ENCODE measurements at regions of chr11 and their contacts with region 1.

Region 1: DNA sequence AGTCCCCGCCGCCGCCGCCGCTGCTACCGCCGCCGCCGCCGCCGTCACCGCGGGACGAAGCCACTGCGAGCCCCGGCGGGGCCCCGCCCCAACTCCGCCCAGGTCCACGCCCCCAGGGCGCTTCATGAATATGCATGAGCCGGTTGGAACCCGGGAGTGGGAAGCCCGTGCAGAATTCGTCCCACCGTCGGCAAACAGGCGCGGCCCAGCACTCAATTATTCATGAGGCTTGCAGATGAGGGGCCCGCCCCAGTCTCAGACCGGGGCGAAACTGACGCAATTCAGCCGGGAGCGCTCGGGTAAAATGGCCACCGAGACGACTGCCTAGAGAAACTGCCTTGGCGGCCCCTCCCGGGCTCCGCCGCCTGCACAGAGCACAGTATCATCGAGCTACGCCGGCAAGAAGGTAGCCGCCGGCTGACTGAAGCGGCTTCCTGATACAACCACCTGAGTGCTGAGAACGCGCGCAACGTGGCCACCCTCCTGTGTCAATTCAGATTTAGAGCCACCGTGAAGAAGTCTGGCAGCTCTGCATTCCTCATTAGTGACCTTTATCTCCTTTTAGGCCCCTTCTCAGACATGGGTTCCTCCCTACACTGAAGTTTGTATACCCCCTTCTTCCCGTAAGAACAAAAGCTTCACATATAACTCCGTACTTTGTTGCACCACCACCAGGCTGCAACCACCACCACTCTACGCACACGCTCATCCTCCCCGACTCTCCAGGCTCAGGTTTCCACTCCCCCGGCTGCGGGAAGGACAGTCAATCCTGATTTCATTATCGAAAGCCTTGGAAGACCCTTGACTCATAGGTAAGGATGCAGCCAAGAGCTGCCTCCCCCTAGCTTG is at the start of gene TNKS1BP1:
- DNase-seq: peak; percentile 97
- ATAC-seq: peak; percentile 80
- H3K4me3 ChIP-seq: peak within 1 kb of the TSS; percentile 97
- H3K27ac ChIP-seq: peak within 1 kb of the TSS; percentile 99
- H3K4me1 ChIP-seq: peaks cover 20% of the 10 kb centered on the region
- H3K27me3 ChIP-seq: no peaks in the 10 kb centered on the region
- CTCF ChIP-seq: no peak
- POLR2A ChIP-seq: peak; percentile 81
- RAD21 ChIP-seq: 0 out of 2 replicates have a peak, but pooled peaks have one; percentile 11
- total RNA-seq, gene TNKS1BP1: 28.6 and 31.7 TPM in 2 replicates

Region 2: GRCh38 chr11:57124917-57125316 is 200.2 kb before region 1 on chr11:
- CTCF ChIA-PET with region 1: no interaction called
- POLR2A ChIA-PET with region 1: no interaction called
- dilution Hi-C with region 1: no loop called
- in situ Hi-C with region 1: no loop called
- intact Hi-C with region 1: no loop called
- DNase-seq: no peak
- ATAC-seq: no peak
- H3K4me3 ChIP-seq: no peak overlapping the region
- H3K27ac ChIP-seq: no peak overlapping the region
- H3K4me1 ChIP-seq: no peaks in the 10 kb centered on the region
- H3K27me3 ChIP-seq: peaks cover 19% of the 10 kb centered on the region
- CTCF ChIP-seq: no peak
- POLR2A ChIP-seq: no peak
- RAD21 ChIP-seq: no peak

Region 3: GRCh38 chr11:57277845-57278709 is 47.0 kb before region 1 on chr11:
- CTCF ChIA-PET with region 1: no interaction called
- POLR2A ChIA-PET with region 1: no interaction called
- dilution Hi-C with region 1: no loop called
- in situ Hi-C with region 1: no loop called
- intact Hi-C with region 1: loop called (anchors 1 kb)
- DNase-seq: peak; percentile 84
- ATAC-seq: peak; percentile 89
- H3K4me3 ChIP-seq: peak overlapping the region; percentile 13; the same call in 1 of the 2 replicates
- H3K27ac ChIP-seq: peak overlapping the region; percentile 84
- H3K4me1 ChIP-seq: peaks cover 29% of the 10 kb centered on the region
- H3K27me3 ChIP-seq: no peaks in the 10 kb centered on the region
- CTCF ChIP-seq: peak; percentile 90
- POLR2A ChIP-seq: no peak
- RAD21 ChIP-seq: peak; percentile 76

Region 4: DNA sequence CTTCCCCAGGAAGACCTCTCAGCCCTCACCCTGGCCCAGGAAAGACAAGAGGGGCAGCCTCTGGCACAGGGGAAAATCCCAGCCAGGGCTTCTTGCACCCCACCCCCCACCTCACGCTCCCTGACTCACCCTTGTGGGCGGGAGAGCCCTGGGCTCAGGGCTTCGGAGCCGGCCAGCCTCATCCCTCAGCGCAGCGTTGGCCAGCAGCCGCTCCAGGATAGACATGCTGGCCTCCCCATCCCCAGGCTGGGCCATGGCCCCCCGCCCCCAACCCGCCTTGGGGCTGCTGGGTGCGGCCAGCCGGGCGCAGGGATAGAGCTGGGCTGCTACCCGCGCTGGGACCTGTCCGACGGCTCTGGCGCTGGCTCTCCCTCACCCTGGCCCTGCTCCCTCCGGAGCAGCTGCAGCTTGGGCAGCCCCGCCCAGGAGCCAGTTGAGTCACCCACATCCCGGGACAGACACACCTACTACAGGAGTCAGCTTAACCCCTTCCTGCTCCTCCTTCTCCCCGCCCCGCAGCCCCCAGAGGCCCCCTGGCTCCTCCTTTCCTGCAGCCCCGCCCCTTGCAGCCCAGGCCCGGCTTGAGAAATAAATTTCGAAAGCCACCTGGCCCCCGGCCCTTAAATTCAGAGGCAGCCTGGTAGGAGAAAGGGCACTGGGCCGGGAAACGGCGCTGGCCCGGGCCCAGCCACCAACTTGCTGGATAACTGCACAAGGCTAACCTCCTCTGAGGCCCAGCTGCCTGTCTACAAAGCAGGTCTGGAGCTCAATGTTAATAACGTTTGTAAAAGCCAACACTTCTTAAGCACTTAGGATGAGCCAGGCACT is 13.8 kb before region 1 on chr11:
- CTCF ChIA-PET with region 1: no interaction called
- POLR2A ChIA-PET with region 1: interaction called, 16 read pairs
- dilution Hi-C with region 1: no loop called
- in situ Hi-C with region 1: no loop called
- intact Hi-C with region 1: loop called (anchors 1 kb)
- DNase-seq: peak; percentile 97
- ATAC-seq: peak; percentile 94
- H3K4me3 ChIP-seq: peak overlapping the region; percentile 43
- H3K27ac ChIP-seq: peak overlapping the region; percentile 97
- H3K4me1 ChIP-seq: peaks cover 50% of the 10 kb centered on the region
- H3K27me3 ChIP-seq: no peaks in the 10 kb centered on the region
- CTCF ChIP-seq: no peak
- POLR2A ChIP-seq: peak; percentile 65; the same call in 1 of the 2 replicates
- RAD21 ChIP-seq: no peak

Measured in IMR-90 (cell line).